Left lung (tissue), 14 donors: ENCODE measurements at regions of chr19 and their contacts with region 1.

Region 1: DNA sequence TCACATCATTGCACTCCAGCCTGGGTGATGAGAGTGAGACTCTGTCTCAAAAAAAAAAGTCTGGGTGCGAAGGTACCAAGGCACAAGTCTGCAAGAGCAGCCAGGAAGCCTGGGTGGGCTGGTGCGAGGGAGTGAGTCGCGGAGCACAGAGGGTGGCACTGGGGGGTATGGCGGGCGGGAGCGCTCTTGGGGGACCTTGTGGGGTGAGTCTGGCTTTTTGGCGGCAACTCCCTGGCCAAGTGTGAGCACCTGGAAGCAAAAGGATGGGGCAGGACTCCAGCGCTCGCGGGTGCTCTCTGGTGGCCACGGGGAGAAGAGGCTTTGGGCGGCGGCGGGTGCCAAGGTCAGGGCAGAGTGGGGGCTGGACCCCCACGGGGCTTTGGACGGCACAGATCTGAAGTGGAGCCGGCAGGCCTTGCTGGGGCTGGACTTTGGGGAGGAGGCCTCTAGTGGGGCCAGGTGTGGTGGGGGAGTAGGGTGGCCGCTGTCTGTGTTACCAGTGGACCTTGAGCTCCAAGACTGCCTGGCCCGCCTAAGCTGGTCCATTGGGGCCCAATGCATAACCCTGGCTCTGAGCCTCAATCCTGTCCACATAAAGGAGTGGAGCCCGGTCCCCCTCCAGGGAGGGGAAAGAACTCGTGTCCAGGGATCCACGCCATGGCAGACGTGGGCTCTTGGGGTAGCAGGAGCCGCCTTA is 1.6 kb downstream of the P2RY11 start:
- DNase-seq: peak in 1 of 4 donors; percentile 89
- ATAC-seq: peak; percentile 58
- H3K4me3 ChIP-seq: peak overlapping the region in 1 of 2 donors; percentile 23
- H3K27ac ChIP-seq: peak overlapping the region in 1 of 2 donors; percentile 82
- H3K4me1 ChIP-seq: peaks cover 0 to 58% of the 10 kb centered on the region in 2 donors
- H3K27me3 ChIP-seq: no peaks in the 10 kb centered on the region
- CTCF ChIP-seq: peak; percentile 24 to 44

Region 2: GRCh38 chr19:9885077-9885552 is 227.9 kb before region 1 on chr19:
- intact Hi-C with region 1: no loop called
- DNase-seq: peak in 2 of 4 donors; percentile 10 to 45
- ATAC-seq: peak; percentile 38
- H3K4me3 ChIP-seq: no peak overlapping the region
- H3K27ac ChIP-seq: no peak overlapping the region
- H3K4me1 ChIP-seq: no peaks in the 10 kb centered on the region
- H3K27me3 ChIP-seq: no peaks in the 10 kb centered on the region
- CTCF ChIP-seq: peak in 1 of 2 donors; percentile 18

Region 3: GRCh38 chr19:9958379-9958821 is 154.6 kb before region 1 on chr19:
- intact Hi-C with region 1: no loop called
- DNase-seq: no peak
- ATAC-seq: no peak
- H3K4me3 ChIP-seq: no peak overlapping the region
- H3K27ac ChIP-seq: no peak overlapping the region
- H3K4me1 ChIP-seq: no peaks in the 10 kb centered on the region
- H3K27me3 ChIP-seq: peaks cover 0 to 55% of the 10 kb centered on the region in 2 donors
- CTCF ChIP-seq: no peak

Region 4: DNA sequence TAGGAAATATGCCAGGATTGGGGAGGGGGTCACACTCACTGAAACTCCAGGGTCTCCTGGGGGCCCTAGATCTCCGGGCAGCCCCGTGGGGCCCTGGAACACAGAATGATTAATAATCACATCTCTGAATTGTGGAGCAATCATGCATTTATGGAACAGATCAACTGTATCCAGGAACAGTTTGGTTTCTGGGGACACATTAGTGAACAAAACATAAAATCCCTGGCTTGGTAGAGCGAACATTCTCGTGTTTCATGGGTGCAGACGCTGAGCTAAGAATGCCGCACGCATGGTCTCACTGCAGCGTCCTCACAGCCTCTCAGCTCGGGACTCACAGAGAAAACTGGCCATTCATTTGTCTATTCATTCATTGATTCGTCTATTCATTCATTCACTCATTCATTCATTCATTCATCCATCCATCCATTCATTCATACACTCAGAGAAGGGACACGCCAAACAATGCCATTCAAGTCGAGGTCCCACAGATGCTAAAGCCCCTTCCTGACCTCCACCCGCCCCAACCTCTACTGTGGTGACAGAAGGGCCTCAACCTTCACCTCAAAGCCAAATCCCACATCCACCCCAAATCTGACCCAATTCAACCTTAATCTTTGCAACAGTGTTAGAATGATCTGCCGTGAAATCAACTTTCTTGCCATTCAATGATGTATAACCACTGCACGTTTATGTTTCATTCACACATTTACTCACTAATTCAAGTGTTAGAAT is 141.7 kb before region 1 on chr19:
- intact Hi-C with region 1: no loop called
- DNase-seq: no peak
- ATAC-seq: no peak
- H3K4me3 ChIP-seq: no peak overlapping the region
- H3K27ac ChIP-seq: no peak overlapping the region
- H3K4me1 ChIP-seq: no peaks in the 10 kb centered on the region
- H3K27me3 ChIP-seq: peaks cover 0 to 29% of the 10 kb centered on the region in 2 donors
- CTCF ChIP-seq: no peak

Region 5: DNA sequence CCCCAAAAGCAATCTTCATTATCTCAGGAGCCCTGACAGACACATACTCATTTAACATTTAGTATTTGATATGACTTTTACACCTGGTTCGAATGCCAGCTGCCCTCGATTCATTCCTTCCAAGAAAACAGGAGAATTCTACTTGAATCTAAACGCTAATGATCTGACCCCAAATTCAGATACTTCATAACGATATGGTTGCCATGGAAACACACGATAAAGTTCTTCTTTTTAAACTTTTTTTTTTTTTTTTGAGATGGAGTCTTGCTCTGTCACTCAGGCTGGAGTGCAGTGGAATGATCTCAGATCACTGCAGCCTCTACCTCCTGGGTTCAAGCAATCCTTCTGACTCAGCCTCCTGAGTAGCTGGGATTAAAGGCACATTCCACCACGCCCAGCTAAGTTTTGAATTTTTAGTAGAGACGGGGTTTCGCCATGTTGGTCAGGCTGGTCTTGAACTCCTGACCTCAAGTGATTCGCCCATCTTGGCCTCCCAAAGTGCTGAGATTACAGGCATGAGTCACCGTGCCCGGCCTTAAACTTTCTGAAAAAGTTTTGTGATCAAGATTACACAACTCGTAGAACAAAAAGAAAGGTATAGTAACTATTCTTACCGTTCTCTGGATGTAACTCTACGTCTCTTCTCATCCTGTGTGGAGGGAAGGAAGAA is 60.3 kb after region 1 on chr19:
- intact Hi-C with region 1: no loop called
- DNase-seq: peak in 1 of 4 donors; percentile 11
- ATAC-seq: no peak
- H3K4me3 ChIP-seq: no peak overlapping the region
- H3K27ac ChIP-seq: no peak overlapping the region
- H3K4me1 ChIP-seq: no peaks in the 10 kb centered on the region
- H3K27me3 ChIP-seq: no peaks in the 10 kb centered on the region
- CTCF ChIP-seq: no peak

Region 6: GRCh38 chr19:10245189-10245939 is 132.3 kb after region 1 on chr19:
- intact Hi-C with region 1: loop called in 1 of 2 experiments (anchors 10 kb)
- DNase-seq: no peak
- ATAC-seq: no peak
- H3K4me3 ChIP-seq: no peak overlapping the region
- H3K27ac ChIP-seq: no peak overlapping the region
- H3K4me1 ChIP-seq: peaks cover 0 to 6% of the 10 kb centered on the region in 2 donors
- H3K27me3 ChIP-seq: no peaks in the 10 kb centered on the region
- CTCF ChIP-seq: no peak